Motor neuron (in vitro differentiated cells): ENCODE measurements at regions of chr2 and their contacts with region 1.

Region 1: GRCh38 chr2:169438460-169439072 is 40.7 kb upstream of the BBS5 start:
- ATAC-seq: peak in 5 of 8 experiments; percentile 92 to 97 (median 96)
- H3K4me3 ChIP-seq: no peak overlapping the region
- H3K27ac ChIP-seq: no peak overlapping the region
- H3K4me1 ChIP-seq: peaks cover 0 to 14% of the 10 kb centered on the region in 2 donors

Region 2: GRCh38 chr2:169528271-169528701 is 89.7 kb after region 1 on chr2:
- in situ Hi-C with region 1: loop called in 1 of 9 experiments (anchors 25 kb)
- ATAC-seq: peak in 4 of 8 experiments; percentile 34 to 91 (median 85)
- H3K4me3 ChIP-seq: no peak overlapping the region
- H3K27ac ChIP-seq: no peak overlapping the region
- H3K4me1 ChIP-seq: peaks cover 5 to 12% of the 10 kb centered on the region in 2 donors

Region 3: GRCh38 chr2:169815849-169816248 is 377.3 kb after region 1 on chr2:
- in situ Hi-C with region 1: no loop called
- ATAC-seq: peak in 1 of 8 experiments; percentile 91
- H3K4me3 ChIP-seq: no peak overlapping the region
- H3K27ac ChIP-seq: no peak overlapping the region
- H3K4me1 ChIP-seq: no peaks in the 10 kb centered on the region